BJ (cell line): ENCODE measurements at regions of chr10 and their contacts with region 1.

Region 1: GRCh38 chr10:79243181-79244067 is 103.8 kb upstream of the PPIF start:
- DNase-seq: no peak
- H3K4me3 ChIP-seq: peak overlapping the region; percentile 46
- H3K27me3 ChIP-seq: no peaks in the 10 kb centered on the region
- CTCF ChIP-seq: no peak

Region 2: GRCh38 chr10:79229810-79230327 is 13.6 kb before region 1 on chr10:
- CTCF ChIA-PET with region 1: interaction called, 3 read pairs
- POLR2A ChIA-PET with region 1: interaction called, 11 read pairs
- DNase-seq: no peak
- H3K4me3 ChIP-seq: no peak overlapping the region
- H3K27me3 ChIP-seq: no peaks in the 10 kb centered on the region
- CTCF ChIP-seq: no peak